Posterior cingulate gyrus (tissue), 11 donors: ENCODE measurements at regions of chr9 and their contacts with region 1.

Region 1: DNA sequence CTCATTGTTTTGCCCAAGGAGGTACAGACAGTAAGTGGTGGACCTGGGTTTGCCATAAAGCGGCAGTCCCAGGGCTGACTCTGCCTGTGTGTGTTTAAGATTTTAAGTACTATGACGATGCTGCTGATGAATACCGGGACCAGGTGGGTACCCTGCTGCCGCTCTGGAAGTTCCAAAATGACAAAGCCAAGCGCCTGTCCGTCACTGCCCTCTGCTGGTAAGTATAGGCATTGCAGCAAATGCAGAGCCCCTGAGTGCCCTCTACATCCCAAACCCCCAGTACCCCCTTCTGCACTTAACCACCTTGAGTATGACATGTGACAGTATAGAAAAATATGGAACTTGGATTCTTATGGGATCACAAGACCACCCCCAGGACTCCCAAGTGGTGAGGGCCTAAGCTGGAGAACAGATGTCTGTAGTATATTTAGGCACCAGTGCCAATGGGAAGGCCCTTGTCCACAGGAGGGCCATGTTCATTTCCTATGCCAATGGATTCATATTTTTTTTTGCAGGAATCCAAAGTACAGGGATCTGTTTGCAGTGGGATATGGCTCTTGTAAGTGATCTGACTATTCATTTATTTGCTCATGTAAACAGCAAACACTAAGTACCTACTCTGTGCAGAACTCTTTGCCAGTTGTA is 22.0 kb downstream of the ENHO start:
- DNase-seq: peak in 9 of 10 donors; percentile 54 to 95 (median 80)

Region 2: DNA sequence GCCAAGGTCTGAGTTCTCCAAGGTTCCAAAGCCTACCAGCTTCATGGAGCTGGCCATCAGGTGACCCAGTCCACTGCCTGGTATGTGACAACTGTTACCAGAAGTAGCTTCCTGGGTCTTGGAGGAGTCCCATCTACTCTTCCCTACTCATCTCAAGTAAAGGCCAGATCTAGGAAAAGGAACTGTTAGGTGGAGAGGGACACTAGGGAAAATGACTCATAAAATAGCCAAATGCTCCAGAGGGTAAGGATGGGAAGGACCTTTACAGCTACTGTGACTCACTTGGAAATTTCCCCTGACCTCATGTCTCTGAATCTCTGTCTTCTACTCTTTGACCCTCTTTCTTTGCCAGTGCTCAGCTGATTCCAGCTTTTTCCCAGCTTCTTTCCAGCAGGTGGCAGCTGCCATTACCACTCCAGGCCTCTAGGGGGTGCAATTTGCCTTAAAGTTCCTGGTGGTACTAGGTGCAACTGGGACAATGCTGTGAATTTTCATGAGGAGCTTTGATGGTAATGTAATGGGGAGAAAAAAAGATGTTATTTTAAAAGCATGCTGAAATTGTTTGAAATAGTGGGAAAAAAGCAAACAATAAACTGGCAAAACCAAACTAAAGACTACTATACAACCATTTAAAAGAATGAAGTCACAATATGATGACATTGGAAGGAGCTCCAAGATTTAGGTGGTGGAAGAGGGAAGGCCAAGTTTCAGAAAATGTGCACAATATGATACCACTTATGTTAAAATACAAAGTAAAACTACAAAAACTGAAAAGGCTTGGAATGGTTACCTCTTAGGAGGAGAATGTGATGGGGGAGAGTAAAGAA is 97.0 kb before region 1 on chr9:
- intact Hi-C with region 1: loop called (anchors 1 kb)
- DNase-seq: peak; percentile 59 to 95 (median 84)

Region 3: GRCh38 chr9:34458013-34458958 is 42.5 kb before region 1 on chr9 and contains the starts of genes DNAI1 and FAM219A:
- intact Hi-C with region 1: loop called (anchors 5 kb)
- DNase-seq: peak; percentile 97 to 100 (median 99)

Region 4: DNA sequence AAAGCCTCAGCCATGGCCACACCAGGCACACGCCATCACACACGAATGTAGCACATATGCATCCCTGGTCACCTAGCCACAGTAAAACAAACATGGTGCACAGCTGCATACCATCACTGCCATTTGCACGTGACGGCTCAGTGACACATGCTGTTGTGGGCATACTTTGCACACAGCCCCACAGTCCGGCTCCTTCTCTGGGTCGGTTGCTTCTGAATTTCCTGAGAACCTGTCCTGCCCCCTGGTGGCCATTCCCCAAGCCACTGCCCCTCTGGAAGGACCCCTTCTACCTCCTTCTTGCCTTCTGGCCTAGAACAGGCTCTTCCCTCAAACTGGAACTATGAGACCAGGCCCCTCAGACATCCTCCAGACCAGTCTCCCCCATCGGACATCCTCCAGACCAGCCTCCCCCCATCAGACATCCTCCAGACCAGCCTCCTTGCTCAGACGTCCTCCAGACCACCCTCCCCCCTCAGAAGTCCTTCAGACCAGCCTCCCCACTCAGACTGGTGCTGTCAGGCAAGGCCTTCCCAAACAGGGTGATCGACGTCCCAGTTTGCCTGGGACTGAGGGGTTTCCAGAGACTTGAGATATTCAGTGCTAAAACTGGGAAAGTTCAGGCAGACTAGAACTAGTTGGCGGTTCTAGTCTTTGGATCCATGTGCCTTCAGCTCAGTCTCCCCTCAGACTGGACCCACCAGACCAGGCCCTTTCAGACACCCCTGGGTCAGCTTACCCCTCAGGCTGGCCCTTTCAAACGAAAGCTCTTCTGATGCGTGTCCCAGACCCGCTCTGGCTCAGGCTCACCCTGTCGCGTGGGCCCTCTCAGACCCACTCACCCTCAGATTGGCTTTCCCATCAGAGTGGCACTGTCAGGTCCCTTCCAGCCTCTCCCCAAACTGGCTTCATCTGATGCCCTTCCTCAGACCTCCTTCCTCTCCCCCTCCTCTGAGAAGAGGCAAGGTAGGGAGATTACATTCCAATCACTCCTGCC is 46.4 kb after region 1 on chr9:
- intact Hi-C with region 1: loop called (anchors 1 kb)
- DNase-seq: peak; percentile 58 to 96 (median 79)